ENCODE measurements at regions of chr9 and their contacts with region 1.

Region 1: GRCh38 chr9:114291064-114291474 is 31.8 kb upstream of the ORM1 start:
- DNase-seq: peak; percentile 75
- H3K4me3 ChIP-seq: no peak overlapping the region
- H3K27ac ChIP-seq: no peak overlapping the region
- H3K4me1 ChIP-seq: no peaks in the 10 kb centered on the region
- H3K27me3 ChIP-seq: no peaks in the 10 kb centered on the region
- CTCF ChIP-seq: peak; percentile 90 to 96 (median 96)
- EP300 ChIP-seq: no peak
- POLR2A ChIP-seq: no peak

Region 2: DNA sequence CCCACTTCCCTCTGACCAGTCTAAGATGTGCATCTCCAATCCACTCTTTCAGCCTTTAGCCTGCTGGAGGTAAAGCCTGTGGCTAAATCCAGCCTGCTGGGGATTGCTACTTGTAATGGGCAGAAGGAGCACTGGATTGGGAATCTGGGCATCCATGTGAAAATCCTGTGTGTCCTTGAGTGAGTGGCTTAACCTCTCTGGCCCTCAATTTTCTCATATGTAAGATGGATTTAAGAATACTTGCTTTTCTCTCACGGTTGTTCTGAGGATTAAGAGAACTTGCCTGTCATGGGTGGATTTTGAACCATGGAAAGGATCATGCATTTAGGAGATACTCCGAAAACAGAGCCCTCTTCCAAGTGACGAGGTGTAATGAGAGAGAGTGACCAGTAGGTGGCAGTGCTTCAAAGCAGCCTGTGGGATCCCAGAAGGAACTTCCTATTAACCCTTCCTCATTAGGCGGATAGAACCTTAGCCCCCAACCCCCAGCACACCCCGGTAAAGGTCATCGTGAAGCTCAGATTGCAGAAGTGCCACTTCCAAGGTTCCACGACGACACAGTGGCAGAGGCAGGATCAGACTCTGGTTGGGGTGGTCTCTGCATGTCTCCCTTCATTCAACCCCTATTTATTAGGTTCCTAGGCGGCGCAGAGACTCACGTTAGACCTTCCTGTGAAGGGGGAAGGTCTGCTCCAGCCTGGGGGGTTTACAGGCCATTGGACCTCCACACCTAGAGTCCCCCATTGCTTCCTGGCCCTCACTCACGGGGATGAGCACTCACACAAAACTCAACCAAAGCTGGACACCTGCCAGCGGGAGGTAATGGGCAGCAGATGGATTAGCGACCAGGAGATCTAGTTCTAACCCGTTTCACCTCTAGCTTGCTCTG is 483.7 kb before region 1 on chr9:
- in situ Hi-C with region 1: loop called in 1 of 4 experiments (anchors 25 kb)
- intact Hi-C with region 1: no loop called
- DNase-seq: peak; percentile 53
- H3K4me3 ChIP-seq: peak overlapping the region in 2 of 4 donors; percentile 13 to 18
- H3K27ac ChIP-seq: no peak overlapping the region
- H3K4me1 ChIP-seq: peaks cover 0 to 5% (median 4%) of the 10 kb centered on the region in 4 donors
- H3K27me3 ChIP-seq: peaks cover 4% of the 10 kb centered on the region
- CTCF ChIP-seq: peak; percentile 81 to 92 (median 88)
- EP300 ChIP-seq: no peak
- POLR2A ChIP-seq: no peak

Region 3: GRCh38 chr9:114082017-114082762 is 208.9 kb before region 1 on chr9:
- in situ Hi-C with region 1: loop called in 3 of 4 experiments (anchors 10 to 25 kb)
- intact Hi-C with region 1: loop called (anchors 2 kb)
- DNase-seq: peak; percentile 92
- H3K4me3 ChIP-seq: no peak overlapping the region
- H3K27ac ChIP-seq: peak overlapping the region; percentile 60 to 78 (median 77)
- H3K4me1 ChIP-seq: peaks cover 5 to 32% (median 24%) of the 10 kb centered on the region in 4 donors
- H3K27me3 ChIP-seq: no peaks in the 10 kb centered on the region
- CTCF ChIP-seq: peak; percentile 90 to 94 (median 92)
- EP300 ChIP-seq: no peak
- POLR2A ChIP-seq: no peak

Region 4: GRCh38 chr9:114108016-114108833 is 182.8 kb before region 1 on chr9:
- in situ Hi-C with region 1: loop called in 1 of 4 experiments (anchors 10 kb)
- intact Hi-C with region 1: loop called (anchors 2 kb)
- DNase-seq: peak; percentile 83
- H3K4me3 ChIP-seq: no peak overlapping the region
- H3K27ac ChIP-seq: no peak overlapping the region
- H3K4me1 ChIP-seq: peaks cover 0 to 5% (median 0%) of the 10 kb centered on the region in 4 donors
- H3K27me3 ChIP-seq: peaks cover 7% of the 10 kb centered on the region
- CTCF ChIP-seq: peak; percentile 85 to 94 (median 88)
- EP300 ChIP-seq: no peak
- POLR2A ChIP-seq: no peak